Activated naive CD8-positive, alpha-beta T cell treated with anti-CD3 and anti-CD28 coated beads, Interleukin-2, amount 10 ng/mL, durations not matched to agents 7 days and 5 days (primary cell): ENCODE measurements at regions of chr3 and their contacts with region 1.

Region 1: GRCh38 chr3:156664831-156665178 is 9.6 kb upstream of the TIPARP start:
- DNase-seq: no peak
- ATAC-seq: peak; percentile 64
- H3K4me3 Mint-ChIP-seq: peak overlapping the region; percentile 73
- H3K27ac Mint-ChIP-seq: peak overlapping the region; percentile 91
- H3K4me1 Mint-ChIP-seq: peaks cover 64% of the 10 kb centered on the region
- H3K27me3 Mint-ChIP-seq: no peaks in the 10 kb centered on the region

Region 2: GRCh38 chr3:156554842-156555687 is 109.7 kb before region 1 on chr3 and contains the start of gene SSR3:
- POLR2A ChIA-PET with region 1: interaction called, 11 read pairs
- DNase-seq: peak; percentile 98
- ATAC-seq: peak; percentile 100
- H3K4me3 Mint-ChIP-seq: peak within 1 kb of the TSS; percentile 93
- H3K27ac Mint-ChIP-seq: peak within 1 kb of the TSS; percentile 89
- H3K4me1 Mint-ChIP-seq: peaks cover 32% of the 10 kb centered on the region
- H3K27me3 Mint-ChIP-seq: no peaks in the 10 kb centered on the region
- total RNA-seq, gene SSR3: 113 to 118 TPM

Region 3: GRCh38 chr3:156643729-156644389 is 20.9 kb before region 1 on chr3:
- POLR2A ChIA-PET with region 1: interaction called, 11 read pairs
- DNase-seq: peak; percentile 62
- ATAC-seq: peak; percentile 89
- H3K4me3 Mint-ChIP-seq: peak overlapping the region; percentile 73
- H3K27ac Mint-ChIP-seq: peak overlapping the region; percentile 89
- H3K4me1 Mint-ChIP-seq: peaks cover 22% of the 10 kb centered on the region
- H3K27me3 Mint-ChIP-seq: no peaks in the 10 kb centered on the region

Region 4: GRCh38 chr3:156685198-156685597 is 20.4 kb after region 1 on chr3:
- POLR2A ChIA-PET with region 1: no interaction called
- DNase-seq: no peak
- ATAC-seq: no peak
- H3K4me3 Mint-ChIP-seq: peak overlapping the region; percentile 75
- H3K27ac Mint-ChIP-seq: peak overlapping the region; percentile 59
- H3K4me1 Mint-ChIP-seq: peaks cover 65% of the 10 kb centered on the region
- H3K27me3 Mint-ChIP-seq: no peaks in the 10 kb centered on the region